Natural killer cell (primary cell): ENCODE measurements at regions of chr9 and their contacts with region 1.

Region 1: DNA sequence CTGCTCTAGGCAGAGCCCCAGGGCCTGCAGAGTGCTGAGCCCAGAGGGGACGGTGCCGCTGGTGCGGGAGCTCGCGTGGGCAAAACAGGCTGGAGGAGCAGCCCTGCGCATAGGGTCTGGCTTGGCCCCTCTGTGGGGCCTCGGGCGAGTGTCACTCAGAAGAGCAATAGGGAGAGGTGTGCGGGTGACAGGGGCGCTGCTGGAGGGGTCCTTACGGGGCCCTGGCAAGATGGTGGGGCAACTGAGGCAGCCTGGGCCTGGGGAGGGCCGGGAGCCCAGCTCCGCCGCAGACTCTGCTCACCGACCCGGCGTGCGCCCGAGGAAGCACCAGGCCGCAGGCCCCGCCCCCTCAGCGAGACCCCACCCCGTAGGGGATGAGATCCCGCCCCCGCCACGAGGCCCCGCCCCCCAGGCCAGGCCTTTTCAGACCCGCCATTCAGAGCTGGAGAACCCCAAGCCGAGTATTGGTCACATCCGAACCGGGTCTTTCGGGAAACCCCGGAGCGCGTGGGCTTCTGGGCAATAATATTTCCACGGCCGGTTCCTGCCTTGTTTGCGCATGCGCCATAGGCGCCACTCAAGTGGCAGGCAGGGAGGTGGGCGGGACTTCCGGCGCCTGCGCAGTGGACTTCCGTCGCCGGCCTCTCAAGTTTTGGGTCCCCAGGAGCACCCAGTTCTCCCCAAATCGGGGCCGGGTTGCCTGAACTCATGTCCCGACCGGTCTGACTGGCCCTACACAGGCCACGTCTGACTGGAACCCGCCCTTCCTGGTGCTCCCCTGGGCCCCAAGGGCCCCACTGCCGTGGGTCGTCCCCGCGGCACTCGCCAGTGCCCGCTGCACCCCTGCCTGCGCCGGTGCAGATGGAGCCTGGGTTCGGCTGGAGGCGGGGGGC is 1.3 kb upstream of the RNF208 start:
- DNase-seq: peak; percentile 97 to 99
- ATAC-seq: peak; percentile 93 to 98 (median 94)
- H3K4me3 ChIP-seq: peak overlapping the region; percentile 58
- H3K4me3 Mint-ChIP-seq: peak overlapping the region; percentile 86
- H3K27ac ChIP-seq: peak overlapping the region; percentile 84
- H3K27ac Mint-ChIP-seq: peak overlapping the region; percentile 62 to 88
- H3K4me1 ChIP-seq: peaks cover 31% of the 10 kb centered on the region
- H3K4me1 Mint-ChIP-seq: peaks cover 5 to 11% of the 10 kb centered on the region in 2 donors
- H3K27me3 ChIP-seq: peaks cover 7% of the 10 kb centered on the region
- H3K27me3 Mint-ChIP-seq: peaks cover 0 to 3% of the 10 kb centered on the region in 2 donors
- CTCF ChIP-seq: no peak

Region 2: DNA sequence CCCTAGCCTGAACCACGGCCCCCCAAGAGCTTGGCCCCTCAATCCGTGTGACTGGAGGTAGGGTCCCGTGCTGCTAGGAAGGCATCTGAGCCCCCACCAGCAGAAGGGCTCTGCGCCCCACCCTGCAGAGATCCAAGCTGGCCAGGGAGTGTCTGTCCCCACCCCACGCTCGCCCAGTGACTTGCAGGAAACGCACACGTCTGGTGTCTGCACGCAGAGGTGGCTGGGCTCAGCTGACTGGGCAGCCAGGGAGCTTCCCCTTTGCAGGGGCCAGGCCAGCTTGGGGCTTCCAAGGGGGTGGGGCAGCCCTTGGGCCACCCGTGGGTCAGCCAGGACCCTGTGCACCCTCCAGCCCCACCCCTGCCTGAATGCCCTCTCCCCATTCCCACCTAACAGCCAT is 701.8 kb before region 1 on chr9:
- intact Hi-C with region 1: no loop called
- DNase-seq: no peak
- ATAC-seq: peak in 1 of 3 donors; percentile 18
- H3K4me3 ChIP-seq: no peak overlapping the region
- H3K4me3 Mint-ChIP-seq: no peak overlapping the region
- H3K27ac ChIP-seq: no peak overlapping the region
- H3K27ac Mint-ChIP-seq: no peak overlapping the region
- H3K4me1 ChIP-seq: peaks cover 31% of the 10 kb centered on the region
- H3K4me1 Mint-ChIP-seq: peaks cover 4 to 6% of the 10 kb centered on the region in 2 donors
- H3K27me3 ChIP-seq: no peaks in the 10 kb centered on the region
- H3K27me3 Mint-ChIP-seq: no peaks in the 10 kb centered on the region
- CTCF ChIP-seq: no peak

Region 3: GRCh38 chr9:137046098-137046787 is 177.1 kb before region 1 on chr9 and contains the start of gene NPDC1:
- intact Hi-C with region 1: loop called (anchors 5 kb)
- DNase-seq: peak; percentile 76 to 89
- ATAC-seq: peak; percentile 89 to 98 (median 92)
- H3K4me3 ChIP-seq: no peak within 1 kb of the TSS
- H3K4me3 Mint-ChIP-seq: peak within 1 kb of the TSS; percentile 9
- H3K27ac ChIP-seq: no peak within 1 kb of the TSS
- H3K27ac Mint-ChIP-seq: no peak within 1 kb of the TSS
- H3K4me1 ChIP-seq: peaks cover 37% of the 10 kb centered on the region
- H3K4me1 Mint-ChIP-seq: peaks cover 5 to 7% of the 10 kb centered on the region in 2 donors
- H3K27me3 ChIP-seq: peaks cover 74% of the 10 kb centered on the region
- H3K27me3 Mint-ChIP-seq: peaks cover 14 to 34% of the 10 kb centered on the region in 2 donors
- CTCF ChIP-seq: peak; percentile 88
- total RNA-seq, gene NPDC1: 0.87 to 5.6 (median 3.4) TPM

Region 4: DNA sequence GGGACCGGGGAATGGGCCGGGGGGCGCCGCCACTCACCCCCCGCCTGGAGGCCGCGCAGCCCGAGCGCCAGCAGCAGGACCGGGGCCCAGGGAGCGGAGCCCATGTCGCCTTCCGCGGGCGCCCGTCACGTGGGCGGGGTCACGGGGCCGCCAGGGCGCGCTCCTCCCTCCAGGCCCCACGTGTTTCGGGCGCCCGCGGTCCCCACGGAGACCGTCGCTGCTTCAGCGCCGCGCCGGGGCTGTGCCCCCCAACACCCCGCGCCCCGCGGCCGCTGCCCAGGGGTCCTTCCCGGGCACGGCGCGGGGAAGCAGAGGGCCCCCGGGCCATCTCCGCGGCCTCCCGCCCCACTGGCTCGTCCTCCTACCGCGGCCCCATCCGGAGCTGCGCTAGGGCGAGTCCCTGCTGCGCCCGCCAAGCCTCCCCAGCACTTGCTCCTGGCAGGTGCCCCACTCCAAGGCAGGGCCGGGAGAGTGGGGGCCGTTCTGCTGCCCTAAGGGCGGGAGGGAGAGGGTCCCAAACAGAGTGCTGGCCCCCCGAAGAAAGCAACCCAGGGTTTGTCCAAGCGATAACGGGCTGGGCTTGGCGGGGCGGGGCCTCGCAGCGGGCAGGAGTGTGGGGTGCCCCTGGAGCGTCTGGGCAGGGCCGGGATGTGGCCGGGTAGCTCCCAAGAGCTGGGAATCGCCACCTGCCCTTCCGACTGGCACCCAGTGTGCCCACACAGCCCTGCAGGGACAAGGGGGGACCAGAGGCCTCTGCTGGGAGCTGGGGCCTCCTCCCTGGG is 108.5 kb before region 1 on chr9 and contains the start of gene DPP7:
- intact Hi-C with region 1: loop called (anchors 5 kb)
- DNase-seq: peak; percentile 82 to 91
- ATAC-seq: peak; percentile 95 to 96 (median 96)
- H3K4me3 ChIP-seq: peak within 1 kb of the TSS; percentile 48
- H3K4me3 Mint-ChIP-seq: peak within 1 kb of the TSS; percentile 75
- H3K27ac ChIP-seq: peak within 1 kb of the TSS; percentile 33
- H3K27ac Mint-ChIP-seq: no peak within 1 kb of the TSS
- H3K4me1 ChIP-seq: peaks cover 18% of the 10 kb centered on the region
- H3K4me1 Mint-ChIP-seq: no peaks in the 10 kb centered on the region
- H3K27me3 ChIP-seq: no peaks in the 10 kb centered on the region
- H3K27me3 Mint-ChIP-seq: no peaks in the 10 kb centered on the region
- CTCF ChIP-seq: no peak
- total RNA-seq, gene DPP7: 233 to 264 (median 251) TPM

Region 5: DNA sequence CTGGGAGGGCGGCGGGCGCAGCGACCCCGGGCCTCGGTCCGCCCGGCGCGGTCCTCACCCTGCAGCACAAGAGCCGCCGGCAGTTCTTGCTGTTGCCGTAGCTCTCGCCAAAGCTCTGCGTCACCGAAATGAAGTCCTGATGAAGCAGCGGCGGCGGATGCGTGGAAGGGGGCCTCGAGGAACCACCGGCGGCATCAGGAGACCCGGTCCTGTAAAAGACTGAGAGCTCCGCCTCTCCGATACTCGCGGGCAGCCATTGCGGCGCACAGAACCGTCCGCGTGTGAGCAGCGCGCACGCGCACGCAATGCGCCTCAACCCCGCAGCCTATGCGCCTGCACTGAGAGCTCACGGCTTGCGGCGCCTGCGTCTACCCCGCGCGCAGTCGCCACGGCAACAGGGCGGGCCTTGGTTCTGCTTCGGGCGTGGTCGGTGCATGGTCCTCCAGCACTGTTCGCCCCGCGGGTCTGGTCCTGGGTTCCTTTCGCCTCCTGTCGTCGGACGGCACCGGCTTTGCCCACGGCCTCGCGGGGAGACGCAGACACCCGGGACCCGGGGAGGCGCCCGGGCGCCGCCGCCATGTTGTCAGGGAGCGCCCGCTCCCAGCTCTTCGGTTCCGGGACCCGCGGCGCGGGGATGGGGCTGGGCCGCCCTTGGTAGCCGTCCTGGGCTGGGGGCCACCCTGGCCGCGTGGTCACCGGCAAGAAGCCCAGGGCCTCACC is 93.7 kb before region 1 on chr9:
- intact Hi-C with region 1: loop called (anchors 5 kb)
- DNase-seq: peak; percentile 80 to 96
- ATAC-seq: peak; percentile 96 to 99 (median 97)
- H3K4me3 ChIP-seq: peak overlapping the region; percentile 62
- H3K4me3 Mint-ChIP-seq: peak overlapping the region; percentile 79
- H3K27ac ChIP-seq: peak overlapping the region; percentile 63
- H3K27ac Mint-ChIP-seq: peak overlapping the region in 1 of 2 donors; percentile 96
- H3K4me1 ChIP-seq: peaks cover 35% of the 10 kb centered on the region
- H3K4me1 Mint-ChIP-seq: peaks cover 22 to 24% of the 10 kb centered on the region in 2 donors
- H3K27me3 ChIP-seq: no peaks in the 10 kb centered on the region
- H3K27me3 Mint-ChIP-seq: peaks cover 6 to 7% of the 10 kb centered on the region in 2 donors
- CTCF ChIP-seq: no peak

Region 6: GRCh38 chr9:137200311-137201204 is 22.8 kb before region 1 on chr9 and contains the start of gene TPRN:
- intact Hi-C with region 1: loop called (anchors 2 kb)
- DNase-seq: peak; percentile 98
- ATAC-seq: peak; percentile 92 to 99 (median 94)
- H3K4me3 ChIP-seq: peak within 1 kb of the TSS; percentile 75
- H3K4me3 Mint-ChIP-seq: peak within 1 kb of the TSS; percentile 90
- H3K27ac ChIP-seq: peak within 1 kb of the TSS; percentile 82
- H3K27ac Mint-ChIP-seq: peak within 1 kb of the TSS; percentile 83 to 86
- H3K4me1 ChIP-seq: peaks cover 39% of the 10 kb centered on the region
- H3K4me1 Mint-ChIP-seq: peaks cover 16 to 32% of the 10 kb centered on the region in 2 donors
- H3K27me3 ChIP-seq: no peaks in the 10 kb centered on the region
- H3K27me3 Mint-ChIP-seq: no peaks in the 10 kb centered on the region
- CTCF ChIP-seq: no peak
- total RNA-seq, gene TPRN: 8.2 to 10.6 (median 8.4) TPM

Region 7: DNA sequence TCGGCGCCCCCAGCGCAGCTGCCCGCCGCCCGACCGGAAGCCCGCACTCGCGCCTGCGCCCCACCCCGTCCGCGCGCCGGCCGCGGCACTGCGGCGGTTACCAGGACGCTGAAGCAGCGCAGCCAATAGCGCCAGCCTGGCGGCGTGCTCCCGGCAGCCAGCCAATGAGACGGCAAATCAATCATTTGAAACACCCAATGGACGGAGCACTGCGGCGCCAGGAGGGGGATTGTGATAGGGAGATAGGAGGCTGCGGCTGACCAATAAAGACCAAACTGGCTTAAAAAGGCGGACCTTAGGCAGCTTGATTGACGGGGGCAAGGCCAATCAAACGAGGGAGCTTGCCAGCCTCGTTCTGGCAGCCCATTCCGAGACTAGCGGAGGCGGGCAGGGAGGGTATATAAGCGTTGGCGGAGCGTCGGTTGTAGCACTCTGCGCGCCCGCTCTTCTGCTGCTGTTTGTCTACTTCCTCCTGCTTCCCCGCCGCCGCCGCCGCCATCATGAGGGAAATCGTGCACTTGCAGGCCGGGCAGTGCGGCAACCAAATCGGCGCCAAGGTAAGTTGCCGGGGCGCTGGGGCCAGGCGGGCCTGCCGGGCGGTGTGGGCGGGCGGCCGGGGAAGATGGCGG is 17.7 kb after region 1 on chr9 and contains the start of gene TUBB4B:
- intact Hi-C with region 1: loop called (anchors 1 kb)
- DNase-seq: peak; percentile 96 to 100
- ATAC-seq: peak; percentile 73 to 90 (median 76)
- H3K4me3 ChIP-seq: peak within 1 kb of the TSS; percentile 46
- H3K4me3 Mint-ChIP-seq: peak within 1 kb of the TSS; percentile 88
- H3K27ac ChIP-seq: peak within 1 kb of the TSS; percentile 81
- H3K27ac Mint-ChIP-seq: peak within 1 kb of the TSS; percentile 86 to 94
- H3K4me1 ChIP-seq: peaks cover 53% of the 10 kb centered on the region
- H3K4me1 Mint-ChIP-seq: peaks cover 19 to 33% of the 10 kb centered on the region in 2 donors
- H3K27me3 ChIP-seq: no peaks in the 10 kb centered on the region
- H3K27me3 Mint-ChIP-seq: peaks cover 0 to 4% of the 10 kb centered on the region in 2 donors
- CTCF ChIP-seq: no peak
- total RNA-seq, gene TUBB4B: 84.4 to 121 (median 93.9) TPM

Region 8: GRCh38 chr9:137254624-137255447 is 31.5 kb after region 1 on chr9 and contains the start of gene NELFB:
- intact Hi-C with region 1: loop called (anchors 1 kb)
- DNase-seq: peak; percentile 95 to 99
- ATAC-seq: peak; percentile 93 to 96 (median 94)
- H3K4me3 ChIP-seq: peak within 1 kb of the TSS; percentile 85
- H3K4me3 Mint-ChIP-seq: peak within 1 kb of the TSS; percentile 88
- H3K27ac ChIP-seq: no peak within 1 kb of the TSS
- H3K27ac Mint-ChIP-seq: peak within 1 kb of the TSS; percentile 36 to 81
- H3K4me1 ChIP-seq: peaks cover 25% of the 10 kb centered on the region
- H3K4me1 Mint-ChIP-seq: peaks cover 0 to 6% of the 10 kb centered on the region in 2 donors
- H3K27me3 ChIP-seq: no peaks in the 10 kb centered on the region
- H3K27me3 Mint-ChIP-seq: no peaks in the 10 kb centered on the region
- CTCF ChIP-seq: no peak
- total RNA-seq, gene NELFB: 42.9 to 53.8 (median 52.6) TPM